K562 (cell line): ENCODE measurements at regions of chr21 and their contacts with region 1.

Region 1: DNA sequence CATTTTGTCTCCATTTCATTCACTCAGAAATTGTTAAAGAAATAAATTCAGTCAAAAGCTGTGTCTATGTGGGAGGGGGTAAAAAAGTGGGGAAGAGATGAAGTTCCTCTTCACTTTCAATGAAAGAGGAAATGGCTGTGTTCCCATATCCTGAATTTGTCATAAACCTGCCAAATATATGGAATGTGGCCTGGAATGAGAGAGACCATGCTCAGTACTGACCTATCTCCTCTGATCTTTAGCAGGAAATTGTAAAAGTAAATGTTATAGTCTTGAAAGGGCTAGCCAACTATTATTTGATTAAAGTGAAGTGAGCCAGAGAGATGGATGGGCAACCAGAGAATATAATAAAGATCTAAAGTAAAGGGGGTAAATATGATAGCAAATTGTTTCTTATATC is 130.3 kb upstream of the C21orf91 start:
- DNase-seq: no peak
- ATAC-seq: no peak
- H3K4me3 ChIP-seq: no peak overlapping the region
- H3K27ac ChIP-seq: no peak overlapping the region
- H3K4me1 ChIP-seq: no peaks in the 10 kb centered on the region
- H3K27me3 ChIP-seq: no peaks in the 10 kb centered on the region
- CTCF ChIP-seq: no peak
- EP300 ChIP-seq: no peak
- POLR2A ChIP-seq: no peak
- RAD21 ChIP-seq: no peak

Region 2: DNA sequence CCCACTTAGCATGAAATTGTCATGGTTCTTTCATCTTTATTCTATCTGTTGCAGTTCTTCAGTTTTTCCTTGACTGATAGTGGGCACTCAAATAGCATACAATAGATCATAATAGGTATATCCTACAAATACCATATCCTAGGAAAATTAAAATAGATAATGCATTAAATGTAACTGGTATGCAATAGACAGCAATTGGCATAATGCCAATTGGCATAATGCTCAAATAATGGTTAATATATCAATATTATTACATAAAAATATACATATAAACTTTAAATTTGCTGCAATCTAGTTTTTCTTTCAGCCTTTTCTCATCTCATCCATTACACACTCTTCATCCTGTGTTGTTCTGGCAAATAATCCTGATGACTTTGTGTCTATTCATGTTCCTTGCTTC is 1268.7 kb after region 1 on chr21:
- CTCF ChIA-PET with region 1: no interaction called
- POLR2A ChIA-PET with region 1: no interaction called
- in situ Hi-C with region 1: loop called (anchors 10 kb)
- intact Hi-C with region 1: no loop called
- DNase-seq: no peak
- ATAC-seq: no peak
- H3K4me3 ChIP-seq: no peak overlapping the region
- H3K27ac ChIP-seq: no peak overlapping the region
- H3K4me1 ChIP-seq: no peaks in the 10 kb centered on the region
- H3K27me3 ChIP-seq: no peaks in the 10 kb centered on the region
- CTCF ChIP-seq: no peak
- EP300 ChIP-seq: no peak
- POLR2A ChIP-seq: no peak
- RAD21 ChIP-seq: no peak